GM12878 (cell line): ENCODE measurements at regions of chr12 and their contacts with region 1.

Region 1: DNA sequence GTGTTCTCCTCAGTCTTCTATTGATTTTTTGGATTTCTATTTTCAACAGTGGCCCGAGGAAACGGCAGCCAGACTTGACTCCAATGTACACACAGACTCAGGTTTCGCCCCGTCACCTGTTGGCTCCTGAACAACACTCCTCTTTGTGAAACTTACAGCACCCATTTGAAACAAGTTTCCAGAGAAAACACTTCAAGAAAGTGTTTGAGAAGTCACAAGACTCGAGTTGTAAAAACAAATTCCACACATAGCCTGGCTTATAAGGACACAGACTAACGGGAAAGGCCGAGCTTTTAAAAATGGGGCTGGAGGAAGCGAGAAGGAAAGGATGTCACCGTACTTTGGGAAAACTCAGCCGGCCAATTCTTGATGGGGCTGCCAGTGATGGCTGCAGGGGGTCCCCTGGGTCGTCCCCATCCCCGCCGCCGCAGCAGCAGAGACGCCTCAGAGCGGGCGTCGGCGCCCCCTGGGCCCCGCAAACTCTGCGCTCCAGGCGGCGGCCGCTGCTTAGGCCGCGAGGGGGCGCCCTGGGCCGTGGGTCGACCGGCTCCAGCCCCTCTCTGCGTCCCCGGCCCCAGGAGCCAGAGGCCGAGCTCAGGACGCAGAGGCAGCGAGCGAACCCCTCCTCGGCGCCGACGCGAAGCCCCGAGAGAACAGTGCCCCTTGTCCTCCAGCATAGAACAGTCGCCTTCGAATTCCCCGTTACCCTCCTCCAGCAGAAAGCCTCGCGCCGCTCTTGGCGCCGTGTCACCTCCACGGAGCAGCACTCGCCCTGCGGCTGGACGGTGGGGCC is 106.9 kb downstream of the PRICKLE1 start:
- DNase-seq: no peak
- ATAC-seq: peak; percentile 95
- H3K4me3 ChIP-seq: peak overlapping the region; percentile 73
- H3K27ac ChIP-seq: no peak overlapping the region
- H3K4me1 ChIP-seq: peaks cover 9% of the 10 kb centered on the region
- H3K27me3 ChIP-seq: peaks cover 0 to 6% of the 10 kb centered on the region in 2 experiments; a peak in 1 of 4 replicates
- CTCF ChIP-seq: peak; percentile 79 to 96 (median 82)
- EP300 ChIP-seq: no peak
- POLR2A ChIP-seq: no peak
- RAD21 ChIP-seq: peak; percentile 85

Region 2: DNA sequence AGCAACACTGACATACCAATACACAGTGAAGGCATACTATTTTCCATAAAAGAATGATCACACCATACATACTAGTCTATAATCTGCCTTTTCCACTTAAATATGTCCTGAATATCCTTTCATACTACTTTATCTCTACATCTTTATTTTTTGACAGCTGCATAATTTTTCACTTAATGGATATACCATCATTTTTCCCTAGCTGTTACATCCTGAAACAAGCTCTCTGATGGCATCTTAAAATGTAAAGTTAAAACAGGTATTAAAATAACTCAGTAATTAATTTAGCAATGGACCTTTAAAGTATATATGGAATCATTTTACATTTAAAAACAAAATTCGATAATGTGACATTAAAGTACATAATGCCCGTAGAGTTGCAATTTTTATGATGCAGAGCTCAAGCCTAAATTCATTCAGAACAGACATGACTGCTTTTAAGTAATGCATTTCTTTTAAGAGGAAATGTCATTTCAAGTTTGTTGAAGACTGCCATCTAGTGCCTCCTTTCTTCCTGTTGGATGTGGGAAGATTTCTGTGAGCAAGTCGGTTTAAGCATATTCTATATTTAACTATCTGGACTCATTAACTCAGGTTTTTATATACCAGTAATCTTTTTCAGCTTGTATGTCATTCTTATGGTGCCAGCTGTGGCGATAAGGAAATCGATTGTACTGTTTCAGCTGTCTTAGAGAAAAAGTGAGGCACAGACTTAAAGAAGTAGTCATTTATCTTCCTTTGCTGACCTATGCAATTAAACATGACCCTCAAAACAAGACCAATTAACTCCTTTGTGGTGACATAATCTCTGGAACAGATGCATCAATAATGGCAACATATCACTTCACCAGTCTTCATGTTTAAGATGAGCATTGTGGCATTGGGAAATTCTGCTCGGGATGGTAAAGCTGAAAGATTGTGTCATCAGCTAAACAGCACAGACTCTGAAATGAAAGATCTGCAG is 86.6 kb after region 1 on chr12:
- CTCF ChIA-PET with region 1: interaction called, 117 read pairs
- POLR2A ChIA-PET with region 1: interaction called, 4 read pairs
- RAD21 ChIA-PET with region 1: interaction called, 21 read pairs
- SMC1A ChIA-PET with region 1: interaction called, 26 read pairs
- in situ Hi-C with region 1: no loop called
- intact Hi-C with region 1: loop called (anchors 1 kb)
- DNase-seq: peak; percentile 38
- ATAC-seq: peak; percentile 85
- H3K4me3 ChIP-seq: no peak overlapping the region
- H3K27ac ChIP-seq: no peak overlapping the region
- H3K4me1 ChIP-seq: no peaks in the 10 kb centered on the region; the same call in 1 of the 2 replicates
- H3K27me3 ChIP-seq: no peaks in the 10 kb centered on the region
- CTCF ChIP-seq: peak; percentile 54 to 66 (median 54); a peak in 5 of 6 replicates
- EP300 ChIP-seq: no peak
- POLR2A ChIP-seq: no peak
- RAD21 ChIP-seq: peak; percentile 80

Region 3: GRCh38 chr12:42759622-42760273 is 277.1 kb after region 1 on chr12:
- CTCF ChIA-PET with region 1: interaction called, 3 read pairs
- POLR2A ChIA-PET with region 1: interaction called, 6 read pairs
- RAD21 ChIA-PET with region 1: no interaction called
- SMC1A ChIA-PET with region 1: no interaction called
- in situ Hi-C with region 1: no loop called
- intact Hi-C with region 1: loop called (anchors 10 kb)
- DNase-seq: no peak
- ATAC-seq: no peak
- H3K4me3 ChIP-seq: no peak overlapping the region
- H3K27ac ChIP-seq: no peak overlapping the region
- H3K4me1 ChIP-seq: peaks cover 24% of the 10 kb centered on the region
- H3K27me3 ChIP-seq: no peaks in the 10 kb centered on the region
- CTCF ChIP-seq: no peak
- EP300 ChIP-seq: no peak
- POLR2A ChIP-seq: no peak
- RAD21 ChIP-seq: no peak